ENCODE measurements at regions of chr16 and their contacts with region 1.

Region 1: DNA sequence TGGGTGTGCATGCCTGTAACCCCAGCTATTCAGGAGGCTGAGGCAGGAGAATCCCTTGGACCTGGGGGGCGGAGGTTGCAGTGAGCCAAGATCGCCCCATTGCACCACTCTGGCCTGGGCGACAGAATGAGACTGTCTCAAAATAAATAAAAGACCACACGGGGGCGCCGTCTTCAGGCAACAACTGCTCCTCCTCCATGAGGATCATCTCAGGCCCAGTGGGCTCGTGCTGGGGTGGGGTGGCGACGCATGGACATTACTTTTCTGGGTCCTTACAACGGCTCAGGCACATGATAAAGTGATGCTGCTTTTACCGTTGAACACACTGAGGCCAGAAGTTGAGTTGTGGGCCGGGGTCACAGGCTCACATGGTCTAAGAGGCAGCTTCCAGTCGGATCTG is 56.2 kb downstream of the PRMT7 start:
- DNase-seq: peak; percentile 72
- H3K4me3 Mint-ChIP-seq: no peak overlapping the region
- H3K27ac Mint-ChIP-seq: no peak overlapping the region
- H3K4me1 Mint-ChIP-seq: peaks cover 39% of the 10 kb centered on the region
- H3K27me3 Mint-ChIP-seq: peaks cover 3% of the 10 kb centered on the region

Region 2: DNA sequence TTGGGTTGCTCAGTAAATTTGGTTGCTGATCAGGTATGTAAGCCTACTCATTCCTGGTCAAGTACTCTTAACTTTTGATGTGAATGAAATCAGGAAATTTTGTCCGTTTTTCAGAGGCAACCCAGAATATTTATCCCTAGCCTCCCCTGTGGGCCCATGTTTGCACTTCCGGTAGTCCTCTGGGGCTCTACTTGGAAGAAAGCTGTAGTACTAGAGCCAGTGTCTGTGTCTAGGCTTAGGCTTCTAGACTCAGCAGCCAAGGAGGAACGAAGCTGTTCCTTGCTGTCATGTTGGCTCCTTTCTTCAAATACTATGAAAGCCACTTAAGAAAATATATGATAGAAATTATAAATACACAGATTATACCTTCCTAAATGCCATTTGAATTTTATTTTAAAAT is 152.3 kb before region 1 on chr16:
- CTCF ChIA-PET with region 1: no interaction called
- intact Hi-C with region 1: no loop called
- DNase-seq: no peak
- H3K4me3 Mint-ChIP-seq: no peak overlapping the region
- H3K27ac Mint-ChIP-seq: no peak overlapping the region
- H3K4me1 Mint-ChIP-seq: peaks cover 41% of the 10 kb centered on the region
- H3K27me3 Mint-ChIP-seq: no peaks in the 10 kb centered on the region

Region 3: DNA sequence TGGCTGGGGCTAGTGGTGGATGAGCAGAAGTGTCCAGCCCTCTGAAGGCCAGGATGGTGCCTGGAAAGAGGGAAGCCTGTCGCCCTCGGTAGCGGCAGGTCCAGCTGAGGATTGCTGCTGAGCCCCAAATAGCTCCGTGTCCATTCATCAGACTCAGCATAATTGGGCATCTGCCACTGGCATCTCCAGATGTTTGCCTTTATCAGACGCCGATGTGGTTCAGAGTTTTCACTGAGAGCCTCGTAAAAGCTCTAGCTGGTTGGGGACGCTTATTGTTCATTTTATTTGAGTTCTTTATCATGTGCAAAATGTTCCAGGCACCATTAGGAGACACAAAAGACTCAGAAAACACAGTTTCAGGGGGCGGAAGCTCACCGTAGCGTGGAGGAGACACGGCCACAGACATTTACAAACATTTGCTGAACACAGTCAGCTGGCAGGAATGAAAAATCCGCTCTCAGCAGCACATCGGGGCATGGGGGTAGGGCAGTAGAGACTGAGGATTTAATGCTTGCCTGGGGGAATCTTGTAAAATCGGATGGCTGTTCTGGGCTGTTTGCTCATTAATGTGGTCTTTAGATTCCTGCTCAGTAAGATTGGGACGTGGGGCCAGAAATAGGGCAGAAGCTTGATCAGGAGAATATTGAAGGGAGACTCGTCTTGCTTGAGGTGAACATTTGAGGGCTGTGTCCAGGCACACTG is 39.6 kb after region 1 on chr16:
- CTCF ChIA-PET with region 1: no interaction called
- intact Hi-C with region 1: loop called (anchors 5 kb)
- DNase-seq: no peak
- H3K4me3 Mint-ChIP-seq: no peak overlapping the region
- H3K27ac Mint-ChIP-seq: no peak overlapping the region
- H3K4me1 Mint-ChIP-seq: peaks cover under 1% of the 10 kb centered on the region
- H3K27me3 Mint-ChIP-seq: no peaks in the 10 kb centered on the region

Region 4: GRCh38 chr16:68417711-68418301 is 50.8 kb after region 1 on chr16:
- CTCF ChIA-PET with region 1: interaction called, 4 read pairs
- intact Hi-C with region 1: loop called (anchors 5 kb)
- DNase-seq: peak; percentile 89
- H3K4me3 Mint-ChIP-seq: peak overlapping the region; percentile 66
- H3K27ac Mint-ChIP-seq: peak overlapping the region; percentile 92
- H3K4me1 Mint-ChIP-seq: peaks cover 52% of the 10 kb centered on the region
- H3K27me3 Mint-ChIP-seq: no peaks in the 10 kb centered on the region

Region 5: DNA sequence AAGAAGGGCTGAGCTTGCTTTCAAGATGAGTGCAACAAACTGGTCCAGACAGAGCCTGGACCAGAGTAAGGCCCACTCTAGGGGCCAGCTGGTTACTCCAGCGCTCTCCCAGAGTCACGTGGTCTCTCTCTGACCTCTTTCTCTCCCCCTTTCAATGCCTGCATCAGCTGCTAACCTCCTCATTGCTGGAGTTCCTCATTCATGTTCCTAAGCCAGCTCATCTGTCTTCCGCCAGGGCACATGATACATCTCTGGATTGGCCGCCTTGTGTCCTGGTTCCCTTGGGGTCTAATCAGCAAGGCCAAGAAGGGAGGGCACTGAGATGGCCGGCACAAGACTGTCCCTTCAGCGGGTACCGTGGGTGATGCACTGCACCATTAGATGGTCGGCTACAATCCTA is 145.2 kb after region 1 on chr16:
- CTCF ChIA-PET with region 1: interaction called, 15 read pairs
- intact Hi-C with region 1: loop called (anchors 1 kb)
- DNase-seq: no peak
- H3K4me3 Mint-ChIP-seq: no peak overlapping the region
- H3K27ac Mint-ChIP-seq: no peak overlapping the region
- H3K4me1 Mint-ChIP-seq: peaks cover 2% of the 10 kb centered on the region
- H3K27me3 Mint-ChIP-seq: no peaks in the 10 kb centered on the region